ENCODE measurements at regions of chr5 and their contacts with region 1.

Region 1: DNA sequence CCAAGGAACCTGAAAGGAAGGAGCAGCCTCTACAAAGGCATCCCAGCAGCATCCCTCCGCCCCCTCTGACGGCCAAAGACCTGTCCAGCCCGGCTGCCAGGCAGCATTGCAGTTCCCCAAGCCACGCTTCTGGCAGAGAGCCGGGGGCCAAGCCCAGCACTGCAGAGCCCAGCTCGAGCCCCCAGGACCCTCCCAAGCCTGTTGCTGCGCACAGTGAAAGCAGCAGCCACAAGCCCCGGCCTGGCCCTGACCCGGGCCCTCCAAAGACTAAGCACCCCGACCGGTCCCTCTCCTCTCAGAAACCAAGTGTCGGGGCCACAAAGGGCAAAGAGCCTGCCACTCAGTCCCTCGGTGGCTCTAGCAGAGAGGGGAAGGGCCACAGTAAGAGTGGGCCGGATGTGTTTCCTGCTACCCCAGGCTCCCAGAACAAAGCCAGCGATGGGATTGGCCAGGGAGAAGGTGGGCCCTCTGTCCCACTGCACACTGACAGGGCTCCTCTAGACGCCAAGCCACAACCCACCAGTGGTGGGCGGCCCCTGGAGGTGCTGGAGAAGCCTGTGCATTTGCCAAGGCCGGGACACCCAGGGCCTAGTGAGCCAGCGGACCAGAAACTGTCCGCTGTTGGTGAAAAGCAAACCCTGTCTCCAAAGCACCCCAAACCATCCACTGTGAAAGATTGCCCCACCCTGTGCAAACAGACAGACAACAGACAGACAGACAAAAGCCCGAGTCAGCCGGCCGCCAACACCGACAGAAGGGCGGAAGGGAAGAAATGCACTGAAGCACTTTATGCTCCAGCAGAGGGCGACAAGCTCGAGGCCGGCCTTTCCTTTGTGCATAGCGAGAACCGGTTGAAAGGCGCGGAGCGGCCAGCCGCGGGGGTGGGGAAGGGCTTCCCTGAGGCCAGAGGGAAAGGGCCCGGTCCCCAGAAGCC is 30.8 kb downstream of the CD180 start:
- DNase-seq: peak; percentile 56 to 78 (median 70)
- ATAC-seq: peak; percentile 88
- H3K4me3 ChIP-seq: peak overlapping the region; percentile 54
- H3K4me3 Mint-ChIP-seq: peak overlapping the region; percentile 84 to 96 (median 88)
- H3K27ac ChIP-seq: peak overlapping the region; percentile 80
- H3K27ac Mint-ChIP-seq: peak overlapping the region in 8 of 9 donors; percentile 96 to 100 (median 98)
- H3K4me1 ChIP-seq: peaks cover 71 to 73% of the 10 kb centered on the region in 2 donors
- H3K4me1 Mint-ChIP-seq: peaks cover 36 to 83% (median 62%) of the 10 kb centered on the region in 7 donors
- H3K27me3 ChIP-seq: no peaks in the 10 kb centered on the region
- H3K27me3 Mint-ChIP-seq: no peaks in the 10 kb centered on the region

Region 2: GRCh38 chr5:65562731-65563701 is 1602.8 kb before region 1 on chr5 and contains the starts of genes CENPK and PPWD1:
- CTCF ChIA-PET with region 1: no interaction called
- POLR2A ChIA-PET with region 1: no interaction called
- intact Hi-C with region 1: loop called in 1 of 2 experiments (anchors 10 kb)
- DNase-seq: peak; percentile 83 to 97 (median 94)
- ATAC-seq: peak; percentile 99
- H3K4me3 ChIP-seq: peak within 1 kb of the TSS; percentile 93
- H3K4me3 Mint-ChIP-seq: peak within 1 kb of the TSS; percentile 92 to 99 (median 96)
- H3K27ac ChIP-seq: peak within 1 kb of the TSS; percentile 93
- H3K27ac Mint-ChIP-seq: peak within 1 kb of the TSS; percentile 97 to 100 (median 98)
- H3K4me1 ChIP-seq: peaks cover 30% of the 10 kb centered on the region in 2 donors
- H3K4me1 Mint-ChIP-seq: peaks cover 22 to 79% (median 59%) of the 10 kb centered on the region in 7 donors
- H3K27me3 ChIP-seq: no peaks in the 10 kb centered on the region
- H3K27me3 Mint-ChIP-seq: no peaks in the 10 kb centered on the region
- total RNA-seq, gene CENPK: 7.2 to 78.8 (median 14.1) TPM
- total RNA-seq, gene PPWD1: 61.7 to 104 (median 81.2) TPM

Region 3: DNA sequence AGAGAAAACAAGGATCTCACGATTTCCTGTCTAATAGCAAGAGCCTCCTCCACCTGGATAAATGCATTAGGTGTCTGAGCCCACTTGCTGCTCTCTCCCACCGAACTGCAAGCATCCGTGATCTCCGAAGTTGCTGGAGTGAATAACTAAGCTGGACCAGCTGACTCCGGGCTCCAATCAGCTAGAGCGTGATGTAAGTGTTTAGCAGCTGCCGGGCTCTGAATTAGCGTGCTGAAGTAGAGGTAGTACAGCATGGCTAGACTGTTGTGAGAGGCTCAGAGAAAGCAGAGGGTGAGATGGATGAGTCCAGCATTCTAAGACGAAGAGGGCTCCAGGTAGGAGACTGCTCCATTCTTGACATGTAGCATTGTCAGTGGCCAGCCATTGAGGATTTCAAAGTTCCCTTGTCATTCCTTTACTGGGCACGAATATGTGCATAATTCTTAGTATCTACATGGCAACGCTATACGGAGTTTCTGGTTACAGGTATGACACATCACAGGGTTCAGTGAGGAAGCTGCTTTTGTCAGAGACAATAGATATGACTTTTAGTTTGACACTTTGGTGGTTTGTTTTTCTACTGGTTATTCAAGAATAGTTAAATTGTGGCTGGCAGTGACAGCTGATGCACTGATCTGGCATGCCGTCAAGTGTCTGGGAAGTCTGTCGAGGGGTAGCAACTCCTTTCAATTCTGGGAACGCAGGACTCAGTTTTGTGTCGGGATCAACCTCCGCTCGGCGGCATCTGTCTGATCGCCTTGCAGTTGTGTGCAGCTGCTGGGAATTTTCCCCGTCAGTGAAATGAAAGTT is 337.0 kb before region 1 on chr5:
- CTCF ChIA-PET with region 1: no interaction called
- POLR2A ChIA-PET with region 1: no interaction called
- intact Hi-C with region 1: loop called in 1 of 2 experiments (anchors 2 kb)
- DNase-seq: peak; percentile 14 to 67 (median 55)
- ATAC-seq: peak; percentile 93
- H3K4me3 ChIP-seq: peak overlapping the region; percentile 36
- H3K4me3 Mint-ChIP-seq: peak overlapping the region; percentile 72 to 95 (median 84)
- H3K27ac ChIP-seq: peak overlapping the region; percentile 31
- H3K27ac Mint-ChIP-seq: peak overlapping the region; percentile 12 to 92 (median 71)
- H3K4me1 ChIP-seq: peaks cover 0 to 4% of the 10 kb centered on the region in 2 donors
- H3K4me1 Mint-ChIP-seq: peaks cover 12 to 69% (median 19%) of the 10 kb centered on the region in 7 donors
- H3K27me3 ChIP-seq: no peaks in the 10 kb centered on the region
- H3K27me3 Mint-ChIP-seq: peaks cover 0 to 50% (median 26%) of the 10 kb centered on the region in 5 donors

Region 4: DNA sequence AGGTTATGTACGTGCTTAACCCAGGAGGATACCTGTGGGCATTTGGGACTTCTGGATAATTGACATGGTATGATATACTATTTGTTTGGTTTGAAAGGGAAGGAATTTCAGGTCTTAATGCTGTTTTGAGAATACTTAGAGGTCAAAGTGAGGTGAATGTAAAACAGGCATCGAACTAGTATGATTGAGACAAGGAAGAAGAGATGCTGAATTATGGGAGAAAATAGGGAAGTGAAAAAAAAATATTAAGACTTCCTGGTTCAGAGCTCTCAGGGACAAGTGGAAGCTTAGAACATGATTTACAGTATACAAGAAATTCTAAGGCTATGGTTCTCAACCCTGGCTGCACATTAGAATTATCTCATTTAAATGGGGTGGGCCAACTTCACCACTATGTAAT is 84.5 kb before region 1 on chr5:
- CTCF ChIA-PET with region 1: no interaction called
- POLR2A ChIA-PET with region 1: no interaction called
- intact Hi-C with region 1: no loop called
- DNase-seq: no peak
- ATAC-seq: no peak
- H3K4me3 ChIP-seq: no peak overlapping the region
- H3K4me3 Mint-ChIP-seq: no peak overlapping the region
- H3K27ac ChIP-seq: no peak overlapping the region
- H3K27ac Mint-ChIP-seq: no peak overlapping the region
- H3K4me1 ChIP-seq: no peaks in the 10 kb centered on the region
- H3K4me1 Mint-ChIP-seq: peaks cover 0 to 12% (median 8%) of the 10 kb centered on the region in 7 donors
- H3K27me3 ChIP-seq: no peaks in the 10 kb centered on the region
- H3K27me3 Mint-ChIP-seq: no peaks in the 10 kb centered on the region

Region 5: DNA sequence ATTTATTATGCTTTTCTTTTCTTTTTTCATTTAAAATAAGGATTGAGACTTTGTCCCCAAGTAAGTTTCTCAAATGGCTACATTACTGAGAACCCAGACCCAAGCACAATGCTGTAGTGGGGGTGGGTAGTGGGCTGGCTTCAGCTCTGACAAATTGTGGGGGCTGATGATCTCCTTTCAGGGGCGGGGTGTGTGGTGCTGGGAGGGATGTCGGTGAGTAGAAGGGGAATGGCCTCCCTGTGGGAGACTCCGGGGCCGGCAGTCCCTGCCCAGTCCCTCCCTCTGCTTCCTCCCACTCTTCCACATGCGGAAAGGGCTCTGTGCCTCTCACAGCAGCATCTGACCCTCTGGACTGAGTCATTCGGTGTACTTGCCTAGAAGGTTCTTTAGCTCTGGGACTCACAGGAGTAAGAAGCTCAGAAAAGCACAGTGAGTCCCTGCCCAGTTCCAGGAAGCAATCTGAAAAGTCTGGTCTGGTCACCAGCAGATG is 16.6 kb after region 1 on chr5:
- CTCF ChIA-PET with region 1: interaction called, 3 read pairs
- POLR2A ChIA-PET with region 1: interaction called, 50 read pairs
- intact Hi-C with region 1: loop called (anchors 1 kb)
- DNase-seq: peak in 1 of 9 donors; percentile 35
- ATAC-seq: peak; percentile 31
- H3K4me3 ChIP-seq: no peak overlapping the region
- H3K4me3 Mint-ChIP-seq: peak overlapping the region in 6 of 10 donors; percentile 29 to 71 (median 66)
- H3K27ac ChIP-seq: peak overlapping the region; percentile 58
- H3K27ac Mint-ChIP-seq: peak overlapping the region; percentile 31 to 93 (median 88)
- H3K4me1 ChIP-seq: peaks cover 5 to 34% of the 10 kb centered on the region in 2 donors
- H3K4me1 Mint-ChIP-seq: peaks cover 29 to 74% (median 62%) of the 10 kb centered on the region in 7 donors
- H3K27me3 ChIP-seq: no peaks in the 10 kb centered on the region
- H3K27me3 Mint-ChIP-seq: no peaks in the 10 kb centered on the region

Region 6: GRCh38 chr5:67268231-67269021 is 102.6 kb after region 1 on chr5:
- CTCF ChIA-PET with region 1: no interaction called
- POLR2A ChIA-PET with region 1: no interaction called
- intact Hi-C with region 1: no loop called
- DNase-seq: no peak
- ATAC-seq: no peak
- H3K4me3 ChIP-seq: no peak overlapping the region
- H3K4me3 Mint-ChIP-seq: no peak overlapping the region
- H3K27ac ChIP-seq: no peak overlapping the region
- H3K27ac Mint-ChIP-seq: no peak overlapping the region
- H3K4me1 ChIP-seq: no peaks in the 10 kb centered on the region
- H3K4me1 Mint-ChIP-seq: no peaks in the 10 kb centered on the region
- H3K27me3 ChIP-seq: no peaks in the 10 kb centered on the region
- H3K27me3 Mint-ChIP-seq: peaks cover 0 to 13% (median 0%) of the 10 kb centered on the region in 5 donors

Region 7: GRCh38 chr5:67510204-67510603 is 344.4 kb after region 1 on chr5:
- CTCF ChIA-PET with region 1: no interaction called
- POLR2A ChIA-PET with region 1: no interaction called
- intact Hi-C with region 1: loop called in 1 of 2 experiments (anchors 5 kb)
- DNase-seq: no peak
- ATAC-seq: no peak
- H3K4me3 ChIP-seq: no peak overlapping the region
- H3K4me3 Mint-ChIP-seq: no peak overlapping the region
- H3K27ac ChIP-seq: no peak overlapping the region
- H3K27ac Mint-ChIP-seq: peak overlapping the region in 1 of 9 donors; percentile 17
- H3K4me1 ChIP-seq: peaks cover 25 to 28% of the 10 kb centered on the region in 2 donors
- H3K4me1 Mint-ChIP-seq: peaks cover 26 to 51% (median 42%) of the 10 kb centered on the region in 7 donors
- H3K27me3 ChIP-seq: no peaks in the 10 kb centered on the region
- H3K27me3 Mint-ChIP-seq: no peaks in the 10 kb centered on the region

Region 8: GRCh38 chr5:68279984-68280383 is 1114.2 kb after region 1 on chr5:
- CTCF ChIA-PET with region 1: interaction called, 4 read pairs
- POLR2A ChIA-PET with region 1: no interaction called
- intact Hi-C with region 1: loop called in 1 of 2 experiments (anchors 2 kb)
- DNase-seq: peak in 8 of 9 donors; percentile 32 to 84 (median 80)
- ATAC-seq: peak; percentile 94
- H3K4me3 ChIP-seq: peak overlapping the region; percentile 63
- H3K4me3 Mint-ChIP-seq: peak overlapping the region; percentile 84 to 95 (median 90)
- H3K27ac ChIP-seq: peak overlapping the region; percentile 70
- H3K27ac Mint-ChIP-seq: peak overlapping the region; percentile 94 to 98 (median 97)
- H3K4me1 ChIP-seq: peaks cover 59 to 65% of the 10 kb centered on the region in 2 donors
- H3K4me1 Mint-ChIP-seq: peaks cover 39 to 94% (median 81%) of the 10 kb centered on the region in 7 donors
- H3K27me3 ChIP-seq: no peaks in the 10 kb centered on the region
- H3K27me3 Mint-ChIP-seq: no peaks in the 10 kb centered on the region

Region 9: DNA sequence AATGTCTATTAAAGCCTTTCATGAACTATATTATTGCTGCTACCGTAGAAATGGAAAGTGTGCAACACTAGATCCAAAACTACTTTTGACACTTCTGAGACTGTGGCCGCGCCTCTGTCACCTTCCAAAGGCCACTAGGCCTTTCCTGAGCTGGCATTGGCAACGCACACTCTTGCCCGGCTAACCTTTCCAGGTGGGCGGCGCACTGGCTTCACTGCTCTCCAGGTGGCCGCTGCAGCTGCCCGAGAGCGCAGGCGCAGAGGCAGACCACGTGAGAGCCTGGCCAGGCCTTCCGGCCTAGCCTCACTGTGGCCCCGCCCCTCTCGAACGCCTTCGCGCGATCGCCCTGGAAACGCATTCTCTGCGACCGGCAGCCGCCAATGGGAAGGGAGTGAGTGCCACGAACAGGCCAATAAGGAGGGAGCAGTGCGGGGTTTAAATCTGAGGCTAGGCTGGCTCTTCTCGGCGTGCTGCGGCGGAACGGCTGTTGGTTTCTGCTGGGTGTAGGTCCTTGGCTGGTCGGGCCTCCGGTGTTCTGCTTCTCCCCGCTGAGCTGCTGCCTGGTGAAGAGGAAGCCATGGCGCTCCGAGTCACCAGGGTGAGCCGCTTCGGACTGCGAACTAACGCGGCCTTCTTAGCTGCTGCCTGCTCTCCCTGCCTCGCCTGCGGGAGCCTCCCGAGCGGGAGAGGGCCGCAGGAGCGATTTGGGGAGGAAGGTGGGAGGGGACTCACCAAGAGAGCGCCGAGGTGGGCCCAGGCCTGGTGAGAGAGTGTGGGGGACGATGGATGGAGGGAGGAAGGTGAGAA is 2001.1 kb after region 1 on chr5 and contains the start of gene CCNB1:
- CTCF ChIA-PET with region 1: no interaction called
- POLR2A ChIA-PET with region 1: no interaction called
- intact Hi-C with region 1: loop called in 1 of 2 experiments (anchors 10 kb)
- DNase-seq: peak; percentile 91 to 98 (median 94)
- ATAC-seq: peak; percentile 100
- H3K4me3 ChIP-seq: peak within 1 kb of the TSS; percentile 78
- H3K4me3 Mint-ChIP-seq: peak within 1 kb of the TSS; percentile 88 to 98 (median 94)
- H3K27ac ChIP-seq: peak within 1 kb of the TSS; percentile 68
- H3K27ac Mint-ChIP-seq: peak within 1 kb of the TSS; percentile 77 to 94 (median 90)
- H3K4me1 ChIP-seq: peaks cover 5 to 15% of the 10 kb centered on the region in 2 donors
- H3K4me1 Mint-ChIP-seq: peaks cover 17 to 44% (median 26%) of the 10 kb centered on the region in 7 donors
- H3K27me3 ChIP-seq: no peaks in the 10 kb centered on the region
- H3K27me3 Mint-ChIP-seq: no peaks in the 10 kb centered on the region
- total RNA-seq, gene CCNB1: 1.3 to 110 (median 3.4) TPM